ENCODE measurements at regions of chr10 and their contacts with region 1.

Region 1: GRCh38 chr10:101214446-101215396 is 14.5 kb downstream of the LBX1 start:
- DNase-seq: peak; percentile 52
- H3K4me3 Mint-ChIP-seq: no peak overlapping the region
- H3K27ac Mint-ChIP-seq: peak overlapping the region; percentile 1
- H3K4me1 Mint-ChIP-seq: peaks cover 9% of the 10 kb centered on the region
- H3K27me3 Mint-ChIP-seq: peaks cover 76% of the 10 kb centered on the region

Region 2: GRCh38 chr10:100827819-100828737 is 386.6 kb before region 1 on chr10:
- intact Hi-C with region 1: loop called (anchors 5 kb)
- DNase-seq: no peak
- H3K4me3 Mint-ChIP-seq: peak overlapping the region; percentile 75
- H3K27ac Mint-ChIP-seq: peak overlapping the region; percentile 5
- H3K4me1 Mint-ChIP-seq: peaks cover 21% of the 10 kb centered on the region
- H3K27me3 Mint-ChIP-seq: peaks cover 75% of the 10 kb centered on the region

Region 3: GRCh38 chr10:101228153-101228973 is 13.6 kb after region 1 on chr10:
- intact Hi-C with region 1: loop called (anchors 1 kb)
- DNase-seq: no peak
- H3K4me3 Mint-ChIP-seq: no peak overlapping the region
- H3K27ac Mint-ChIP-seq: peak overlapping the region; percentile 12
- H3K4me1 Mint-ChIP-seq: peaks cover 12% of the 10 kb centered on the region
- H3K27me3 Mint-ChIP-seq: peaks cover 71% of the 10 kb centered on the region

Region 4: GRCh38 chr10:101291331-101292193 is 76.8 kb after region 1 on chr10:
- intact Hi-C with region 1: loop called (anchors 2 kb)
- DNase-seq: no peak
- H3K4me3 Mint-ChIP-seq: peak overlapping the region; percentile 58
- H3K27ac Mint-ChIP-seq: no peak overlapping the region
- H3K4me1 Mint-ChIP-seq: no peaks in the 10 kb centered on the region
- H3K27me3 Mint-ChIP-seq: peaks cover 66% of the 10 kb centered on the region

Region 5: GRCh38 chr10:101569838-101570766 is 355.4 kb after region 1 on chr10:
- intact Hi-C with region 1: loop called (anchors 2 kb)
- DNase-seq: peak; percentile 70
- H3K4me3 Mint-ChIP-seq: peak overlapping the region; percentile 71
- H3K27ac Mint-ChIP-seq: no peak overlapping the region
- H3K4me1 Mint-ChIP-seq: peaks cover 13% of the 10 kb centered on the region
- H3K27me3 Mint-ChIP-seq: peaks cover 44% of the 10 kb centered on the region